Vagina (tissue), 2 donors: ENCODE measurements at regions of chr7 and their contacts with region 1.

Region 1: DNA sequence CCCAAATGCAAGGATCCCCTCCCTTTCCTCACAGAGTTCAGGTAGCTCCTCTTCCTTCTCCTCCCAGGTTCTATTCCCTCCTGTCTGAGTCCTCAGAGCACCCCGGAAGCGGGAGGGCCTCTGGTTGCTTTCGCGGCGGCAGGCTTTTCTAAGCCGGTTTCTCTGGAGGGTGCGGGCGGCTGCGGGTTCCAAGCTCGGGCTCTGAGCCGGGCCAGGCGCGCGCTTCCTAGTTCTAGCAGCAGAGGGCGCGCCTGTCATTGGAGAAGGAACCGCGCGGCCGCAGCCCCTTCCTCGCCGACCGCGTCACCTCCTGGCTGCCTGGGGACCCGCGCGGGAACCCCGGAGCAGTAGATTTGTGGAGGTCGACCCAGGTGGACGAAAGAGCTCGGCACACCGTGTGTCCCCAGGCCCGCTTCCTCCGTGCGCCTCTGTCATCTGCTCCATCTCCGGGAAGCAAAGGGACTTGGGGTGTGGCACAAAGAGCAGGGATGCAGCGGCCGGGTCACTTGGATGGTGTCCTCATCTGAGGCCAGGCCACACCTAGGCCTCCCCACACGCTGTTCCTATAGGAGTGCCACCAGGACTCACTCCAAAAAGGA is 389.0 kb upstream of the PODXL start:
- DNase-seq: peak in 1 of 2 donors; percentile 87
- H3K4me3 ChIP-seq: peak overlapping the region in 1 of 2 donors; percentile 7
- H3K27ac ChIP-seq: no peak overlapping the region
- H3K4me1 ChIP-seq: peaks cover 7% of the 10 kb centered on the region
- H3K27me3 ChIP-seq: no peaks in the 10 kb centered on the region
- CTCF ChIP-seq: peak; percentile 53 to 73 (median 64)
- POLR2A ChIP-seq: no peak

Region 2: DNA sequence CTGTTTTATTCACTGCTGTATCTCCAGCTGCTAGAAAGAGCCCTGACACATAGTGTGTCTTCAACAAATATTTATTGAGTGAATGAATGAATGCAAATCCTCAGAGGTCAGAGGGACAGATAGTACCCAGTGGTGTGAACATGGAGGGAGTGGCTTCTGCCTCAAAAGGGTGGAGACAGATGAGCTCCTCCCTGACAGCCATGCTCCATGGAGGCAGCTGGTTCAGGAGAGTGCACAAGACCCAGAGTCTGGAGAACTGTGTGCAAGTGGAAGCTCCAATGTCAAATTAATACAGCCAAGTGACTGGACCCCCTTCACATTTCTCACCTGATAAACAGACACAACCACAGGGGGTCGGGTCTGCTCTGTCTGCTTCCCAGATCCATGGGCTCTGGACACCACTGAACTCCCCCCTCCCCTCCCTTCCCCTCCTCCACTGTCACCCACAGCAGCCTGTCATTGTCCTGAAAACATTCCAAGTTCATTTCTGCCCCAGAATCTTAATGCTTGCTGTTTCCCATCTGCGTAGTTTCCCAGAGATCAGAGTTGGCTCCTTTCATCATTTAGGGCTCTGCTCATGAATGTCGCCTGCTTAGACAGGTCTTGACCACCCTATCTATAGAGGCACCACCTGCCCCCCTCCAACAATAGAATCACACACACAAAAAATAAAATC is 76.1 kb before region 1 on chr7:
- intact Hi-C with region 1: no loop called
- DNase-seq: no peak
- H3K4me3 ChIP-seq: no peak overlapping the region
- H3K27ac ChIP-seq: no peak overlapping the region
- H3K4me1 ChIP-seq: no peaks in the 10 kb centered on the region
- H3K27me3 ChIP-seq: no peaks in the 10 kb centered on the region
- CTCF ChIP-seq: no peak
- POLR2A ChIP-seq: no peak

Region 3: DNA sequence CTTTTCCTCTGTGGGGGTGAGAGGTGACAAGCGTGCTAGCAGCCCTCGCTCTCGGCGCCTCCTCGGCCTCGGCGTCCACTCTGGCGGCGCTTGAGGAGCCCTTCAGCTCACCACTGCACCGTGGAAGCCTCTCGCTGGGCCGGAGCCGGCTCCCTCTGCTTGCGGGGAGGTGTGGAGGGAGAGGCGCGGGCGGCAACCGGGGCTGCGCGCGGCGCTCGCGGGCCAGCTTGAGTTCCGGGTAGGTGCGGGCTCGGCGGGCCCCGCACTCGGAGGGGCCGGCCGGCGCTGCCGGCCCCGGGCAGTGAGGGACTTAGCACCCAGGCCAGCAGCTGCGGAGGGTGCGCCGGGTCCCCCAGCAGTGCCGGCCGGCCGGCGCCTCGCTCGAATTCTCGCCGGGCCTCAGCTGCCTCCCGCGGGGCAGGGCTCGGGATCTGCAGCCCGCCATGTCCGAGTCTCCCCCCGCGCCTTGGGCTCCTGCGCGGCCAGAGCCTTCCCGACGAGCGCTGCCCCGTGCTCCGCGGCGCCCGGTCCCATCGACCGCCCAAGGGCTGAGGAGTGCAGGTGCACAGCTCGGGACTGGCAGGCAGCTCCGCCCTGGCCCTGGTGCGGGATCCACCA is 36.2 kb before region 1 on chr7:
- intact Hi-C with region 1: no loop called
- DNase-seq: peak in 1 of 2 donors; percentile 37
- H3K4me3 ChIP-seq: no peak overlapping the region
- H3K27ac ChIP-seq: no peak overlapping the region
- H3K4me1 ChIP-seq: no peaks in the 10 kb centered on the region
- H3K27me3 ChIP-seq: no peaks in the 10 kb centered on the region
- CTCF ChIP-seq: no peak
- POLR2A ChIP-seq: no peak

Region 4: GRCh38 chr7:132580717-132581285 is 635.4 kb after region 1 on chr7:
- intact Hi-C with region 1: loop called (anchors 10 kb)
- DNase-seq: peak; percentile 77 to 88
- H3K4me3 ChIP-seq: no peak overlapping the region
- H3K27ac ChIP-seq: no peak overlapping the region
- H3K4me1 ChIP-seq: peaks cover 9% of the 10 kb centered on the region
- H3K27me3 ChIP-seq: no peaks in the 10 kb centered on the region
- CTCF ChIP-seq: peak; percentile 69 to 85 (median 77)
- POLR2A ChIP-seq: no peak

Region 5: GRCh38 chr7:133718131-133718530 is 1772.7 kb after region 1 on chr7:
- intact Hi-C with region 1: no loop called
- DNase-seq: no peak
- H3K4me3 ChIP-seq: no peak overlapping the region
- H3K27ac ChIP-seq: no peak overlapping the region
- H3K4me1 ChIP-seq: no peaks in the 10 kb centered on the region
- H3K27me3 ChIP-seq: no peaks in the 10 kb centered on the region
- CTCF ChIP-seq: no peak
- POLR2A ChIP-seq: no peak